Activated CD4-positive, alpha-beta T cell treated with anti-CD3 and anti-CD28 coated beads for 36 hours (primary cell): ENCODE measurements at regions of chr1 and their contacts with region 1.

Region 1: GRCh38 chr1:234409328-234409727 is 36.1 kb downstream of the COA6 start:
- DNase-seq: peak; percentile 21
- ATAC-seq: peak; percentile 53
- H3K4me3 Mint-ChIP-seq: peak overlapping the region; percentile 51
- H3K27ac Mint-ChIP-seq: peak overlapping the region; percentile 89
- H3K4me1 Mint-ChIP-seq: peaks cover 42% of the 10 kb centered on the region
- H3K27me3 Mint-ChIP-seq: no peaks in the 10 kb centered on the region

Region 2: GRCh38 chr1:234114648-234115307 is 294.6 kb before region 1 on chr1:
- CTCF ChIA-PET with region 1: interaction called, 3 read pairs
- POLR2A ChIA-PET with region 1: no interaction called
- intact Hi-C with region 1: loop called (anchors 1 kb)
- DNase-seq: peak; percentile 42
- ATAC-seq: peak; percentile 55
- H3K4me3 Mint-ChIP-seq: peak overlapping the region; percentile 30
- H3K27ac Mint-ChIP-seq: no peak overlapping the region
- H3K4me1 Mint-ChIP-seq: peaks cover 5% of the 10 kb centered on the region
- H3K27me3 Mint-ChIP-seq: peaks cover 12% of the 10 kb centered on the region

Region 3: GRCh38 chr1:234154320-234155251 is 254.7 kb before region 1 on chr1:
- CTCF ChIA-PET with region 1: no interaction called
- POLR2A ChIA-PET with region 1: no interaction called
- intact Hi-C with region 1: loop called in 1 of 2 experiments (anchors 2 kb)
- DNase-seq: peak; percentile 20
- ATAC-seq: peak; percentile 61
- H3K4me3 Mint-ChIP-seq: no peak overlapping the region
- H3K27ac Mint-ChIP-seq: no peak overlapping the region
- H3K4me1 Mint-ChIP-seq: peaks cover 4% of the 10 kb centered on the region
- H3K27me3 Mint-ChIP-seq: peaks cover 4% of the 10 kb centered on the region

Region 4: GRCh38 chr1:234212764-234213657 is 196.3 kb before region 1 on chr1:
- CTCF ChIA-PET with region 1: interaction called, 3 read pairs
- POLR2A ChIA-PET with region 1: no interaction called
- intact Hi-C with region 1: loop called in 1 of 2 experiments (anchors 1 kb)
- DNase-seq: peak; percentile 47
- ATAC-seq: peak; percentile 65
- H3K4me3 Mint-ChIP-seq: no peak overlapping the region
- H3K27ac Mint-ChIP-seq: no peak overlapping the region
- H3K4me1 Mint-ChIP-seq: peaks cover 21% of the 10 kb centered on the region
- H3K27me3 Mint-ChIP-seq: peaks cover 31% of the 10 kb centered on the region

Region 5: GRCh38 chr1:234315091-234315541 is 94.2 kb before region 1 on chr1:
- CTCF ChIA-PET with region 1: interaction called, 7 read pairs
- POLR2A ChIA-PET with region 1: no interaction called
- intact Hi-C with region 1: loop called (anchors 1 to 2 kb)
- DNase-seq: peak; percentile 56
- ATAC-seq: peak; percentile 84
- H3K4me3 Mint-ChIP-seq: peak overlapping the region; percentile 22
- H3K27ac Mint-ChIP-seq: peak overlapping the region; percentile 89
- H3K4me1 Mint-ChIP-seq: peaks cover 63% of the 10 kb centered on the region
- H3K27me3 Mint-ChIP-seq: peaks cover 1% of the 10 kb centered on the region

Region 6: GRCh38 chr1:234393190-234393589 is 16.1 kb before region 1 on chr1:
- CTCF ChIA-PET with region 1: interaction called, 4 read pairs
- POLR2A ChIA-PET with region 1: no interaction called
- intact Hi-C with region 1: loop called in 1 of 2 experiments (anchors 2 kb)
- DNase-seq: no peak
- ATAC-seq: peak; percentile 40
- H3K4me3 Mint-ChIP-seq: no peak overlapping the region
- H3K27ac Mint-ChIP-seq: no peak overlapping the region
- H3K4me1 Mint-ChIP-seq: peaks cover 10% of the 10 kb centered on the region
- H3K27me3 Mint-ChIP-seq: no peaks in the 10 kb centered on the region

Region 7: GRCh38 chr1:234398849-234399381 is 10.4 kb before region 1 on chr1:
- CTCF ChIA-PET with region 1: interaction called, 6 read pairs
- POLR2A ChIA-PET with region 1: no interaction called
- intact Hi-C with region 1: loop called (anchors 1 kb)
- DNase-seq: no peak
- ATAC-seq: peak; percentile 73
- H3K4me3 Mint-ChIP-seq: peak overlapping the region; percentile 44
- H3K27ac Mint-ChIP-seq: peak overlapping the region; percentile 87
- H3K4me1 Mint-ChIP-seq: peaks cover 55% of the 10 kb centered on the region
- H3K27me3 Mint-ChIP-seq: no peaks in the 10 kb centered on the region